Activated CD4-positive, alpha-beta T cell treated with anti-CD3 and anti-CD28 coated beads, Interleukin-2, amount 10 ng/mL, durations not matched to agents 24 days and 14 days (primary cell): ENCODE measurements at regions of chr7 and their contacts with region 1.

Region 1: GRCh38 chr7:24757353-24758275 is at the start of gene GSDME:
- DNase-seq: peak; percentile 86
- H3K4me3 Mint-ChIP-seq: peak within 1 kb of the TSS; percentile 94
- H3K27ac Mint-ChIP-seq: peak within 1 kb of the TSS; percentile 84
- H3K4me1 Mint-ChIP-seq: peaks cover 32% of the 10 kb centered on the region
- H3K27me3 Mint-ChIP-seq: peaks cover 36% of the 10 kb centered on the region
- total RNA-seq, gene GSDME: 9.6 and 10.4 TPM in 2 replicates

Region 2: GRCh38 chr7:23474094-23474828 is 1283.4 kb before region 1 on chr7:
- intact Hi-C with region 1: loop called (anchors 10 kb)
- DNase-seq: peak; percentile 96
- H3K4me3 Mint-ChIP-seq: peak overlapping the region; percentile 84
- H3K27ac Mint-ChIP-seq: peak overlapping the region; percentile 75
- H3K4me1 Mint-ChIP-seq: peaks cover 27% of the 10 kb centered on the region
- H3K27me3 Mint-ChIP-seq: peaks cover 60% of the 10 kb centered on the region

Region 3: GRCh38 chr7:24595671-24596418 is 161.8 kb before region 1 on chr7:
- intact Hi-C with region 1: loop called (anchors 5 kb)
- DNase-seq: peak; percentile 62
- H3K4me3 Mint-ChIP-seq: no peak overlapping the region
- H3K27ac Mint-ChIP-seq: no peak overlapping the region
- H3K4me1 Mint-ChIP-seq: peaks cover 3% of the 10 kb centered on the region
- H3K27me3 Mint-ChIP-seq: no peaks in the 10 kb centered on the region

Region 4: GRCh38 chr7:24741691-24742504 is 15.7 kb before region 1 on chr7:
- intact Hi-C with region 1: no loop called
- DNase-seq: no peak
- H3K4me3 Mint-ChIP-seq: no peak overlapping the region
- H3K27ac Mint-ChIP-seq: no peak overlapping the region
- H3K4me1 Mint-ChIP-seq: no peaks in the 10 kb centered on the region
- H3K27me3 Mint-ChIP-seq: peaks cover 15% of the 10 kb centered on the region

Region 5: DNA sequence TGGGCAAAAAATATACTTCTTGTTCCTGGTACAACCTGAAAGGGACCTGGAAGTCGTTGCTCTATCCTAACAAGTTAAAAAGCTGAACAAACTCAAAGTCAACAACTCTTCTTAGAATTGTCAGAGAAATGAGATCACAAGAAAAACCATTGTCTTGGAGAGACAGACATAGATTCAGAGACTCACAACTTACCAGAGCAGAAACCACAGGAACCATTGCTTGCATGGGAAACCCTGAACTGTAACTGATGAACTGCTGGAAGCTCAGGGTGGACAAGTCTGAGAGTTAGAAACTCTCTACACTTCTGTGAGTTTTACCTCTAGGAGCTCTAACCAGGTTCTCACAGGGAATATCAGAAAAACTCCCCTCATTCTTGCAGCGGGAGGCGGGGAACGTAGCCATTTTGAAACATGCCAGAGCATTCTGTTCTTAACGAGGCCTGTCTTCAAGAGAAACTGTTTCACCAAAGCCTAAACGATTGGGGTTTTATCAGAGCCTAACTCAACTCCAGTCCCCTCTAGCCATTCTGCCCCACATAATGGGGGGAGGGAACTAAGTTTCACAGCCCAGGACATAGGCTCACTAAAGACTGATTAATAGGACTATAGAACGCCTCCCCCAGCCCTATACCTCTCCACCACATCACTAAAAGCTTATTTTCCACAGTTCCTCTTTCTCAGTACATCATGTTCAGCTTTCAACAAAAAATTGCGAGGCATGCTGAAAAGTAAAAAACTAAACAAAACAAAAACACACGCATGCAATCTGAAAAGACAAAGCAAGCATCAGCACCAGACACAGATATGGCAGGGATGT is 11.6 kb after region 1 on chr7:
- intact Hi-C with region 1: loop called (anchors 1 kb)
- DNase-seq: peak; percentile 64
- H3K4me3 Mint-ChIP-seq: peak overlapping the region; percentile 29
- H3K27ac Mint-ChIP-seq: peak overlapping the region; percentile 52
- H3K4me1 Mint-ChIP-seq: peaks cover 26% of the 10 kb centered on the region
- H3K27me3 Mint-ChIP-seq: peaks cover 13% of the 10 kb centered on the region

Region 6: GRCh38 chr7:24907311-24907886 is 149.8 kb after region 1 on chr7:
- intact Hi-C with region 1: loop called (anchors 5 kb)
- DNase-seq: peak; percentile 84
- H3K4me3 Mint-ChIP-seq: no peak overlapping the region
- H3K27ac Mint-ChIP-seq: no peak overlapping the region
- H3K4me1 Mint-ChIP-seq: peaks cover 33% of the 10 kb centered on the region
- H3K27me3 Mint-ChIP-seq: no peaks in the 10 kb centered on the region